Dendritic cell treated with granulocyte-macrophage colony-stimulating factor and Interleukin-4, amounts not matched to agents 40 ng/mL and 50 ng/mL, for 4 days (primary cell): ENCODE measurements at regions of chr16 and their contacts with region 1.

Region 1: DNA sequence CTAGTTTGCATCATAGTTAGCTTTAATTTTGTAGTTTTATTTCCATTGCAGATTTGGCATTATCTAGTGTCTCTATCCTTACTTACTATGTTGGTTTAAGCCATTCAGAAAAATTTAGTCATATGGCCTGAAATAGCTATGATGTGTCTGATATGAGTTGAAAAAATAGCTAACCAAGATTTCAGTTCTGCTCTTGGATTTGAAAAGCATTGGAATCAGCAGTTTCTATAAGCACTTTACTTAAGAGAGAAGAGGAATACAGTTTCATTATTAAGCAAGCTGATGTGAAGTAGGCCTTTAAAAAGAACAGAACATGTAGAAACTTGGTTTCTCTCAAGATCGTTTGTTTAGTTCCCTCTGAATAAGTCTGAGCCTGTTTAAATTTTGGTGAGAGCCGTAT is 25.9 kb downstream of the LPCAT2 start:
- H3K4me3 Mint-ChIP-seq: no peak overlapping the region
- H3K27ac Mint-ChIP-seq: peak overlapping the region; percentile 79
- H3K4me1 Mint-ChIP-seq: peaks cover 30% of the 10 kb centered on the region
- H3K27me3 Mint-ChIP-seq: no peaks in the 10 kb centered on the region

Region 2: GRCh38 chr16:55508941-55509931 is 25.5 kb before region 1 on chr16 and contains the start of gene LPCAT2:
- intact Hi-C with region 1: loop called (anchors 2 kb)
- H3K4me3 Mint-ChIP-seq: peak within 1 kb of the TSS; percentile 98
- H3K27ac Mint-ChIP-seq: peak within 1 kb of the TSS; percentile 91
- H3K4me1 Mint-ChIP-seq: peaks cover 51% of the 10 kb centered on the region
- H3K27me3 Mint-ChIP-seq: no peaks in the 10 kb centered on the region